Activated T-helper 1 cell treated with anti-CD3 and anti-CD28 coated beads, Interleukin-12 subunit alpha, Interleukin-12 subunit beta, Interleukin-2, Interleukin-4 antibody, amounts not matched to agents 30 ng/mL and 10 ng/mL and 1 ng/mL, durations not matched to agents 14 hours and 24 hours and 36 hours (primary cell): ENCODE measurements at regions of chr4 and their contacts with region 1.

Region 1: GRCh38 chr4:75724066-75724866 is at the start of gene USO1:
- DNase-seq: peak; percentile 100
- H3K4me3 Mint-ChIP-seq: peak within 1 kb of the TSS; percentile 96
- H3K27ac Mint-ChIP-seq: peak within 1 kb of the TSS; percentile 97
- H3K4me1 Mint-ChIP-seq: peaks cover 57% of the 10 kb centered on the region
- H3K27me3 Mint-ChIP-seq: no peaks in the 10 kb centered on the region
- total RNA-seq, gene USO1: 44.5 and 48.6 TPM in 2 replicates

Region 2: GRCh38 chr4:74370912-74371311 is 1353.4 kb before region 1 on chr4:
- intact Hi-C with region 1: no loop called
- DNase-seq: peak; percentile 1
- H3K4me3 Mint-ChIP-seq: no peak overlapping the region
- H3K27ac Mint-ChIP-seq: no peak overlapping the region
- H3K4me1 Mint-ChIP-seq: peaks cover 5% of the 10 kb centered on the region
- H3K27me3 Mint-ChIP-seq: peaks cover 17% of the 10 kb centered on the region

Region 3: GRCh38 chr4:75514131-75514948 is 209.9 kb before region 1 on chr4 and contains the starts of genes RCHY1 and THAP6:
- intact Hi-C with region 1: loop called (anchors 1 kb)
- DNase-seq: peak; percentile 90
- H3K4me3 Mint-ChIP-seq: no peak within 1 kb of the TSS
- H3K27ac Mint-ChIP-seq: peak within 1 kb of the TSS; percentile 100
- H3K4me1 Mint-ChIP-seq: peaks cover 47% of the 10 kb centered on the region
- H3K27me3 Mint-ChIP-seq: no peaks in the 10 kb centered on the region
- total RNA-seq, gene RCHY1: 25.0 and 25.6 TPM in 2 replicates
- total RNA-seq, gene THAP6: 16.3 and 17.3 TPM in 2 replicates

Region 4: DNA sequence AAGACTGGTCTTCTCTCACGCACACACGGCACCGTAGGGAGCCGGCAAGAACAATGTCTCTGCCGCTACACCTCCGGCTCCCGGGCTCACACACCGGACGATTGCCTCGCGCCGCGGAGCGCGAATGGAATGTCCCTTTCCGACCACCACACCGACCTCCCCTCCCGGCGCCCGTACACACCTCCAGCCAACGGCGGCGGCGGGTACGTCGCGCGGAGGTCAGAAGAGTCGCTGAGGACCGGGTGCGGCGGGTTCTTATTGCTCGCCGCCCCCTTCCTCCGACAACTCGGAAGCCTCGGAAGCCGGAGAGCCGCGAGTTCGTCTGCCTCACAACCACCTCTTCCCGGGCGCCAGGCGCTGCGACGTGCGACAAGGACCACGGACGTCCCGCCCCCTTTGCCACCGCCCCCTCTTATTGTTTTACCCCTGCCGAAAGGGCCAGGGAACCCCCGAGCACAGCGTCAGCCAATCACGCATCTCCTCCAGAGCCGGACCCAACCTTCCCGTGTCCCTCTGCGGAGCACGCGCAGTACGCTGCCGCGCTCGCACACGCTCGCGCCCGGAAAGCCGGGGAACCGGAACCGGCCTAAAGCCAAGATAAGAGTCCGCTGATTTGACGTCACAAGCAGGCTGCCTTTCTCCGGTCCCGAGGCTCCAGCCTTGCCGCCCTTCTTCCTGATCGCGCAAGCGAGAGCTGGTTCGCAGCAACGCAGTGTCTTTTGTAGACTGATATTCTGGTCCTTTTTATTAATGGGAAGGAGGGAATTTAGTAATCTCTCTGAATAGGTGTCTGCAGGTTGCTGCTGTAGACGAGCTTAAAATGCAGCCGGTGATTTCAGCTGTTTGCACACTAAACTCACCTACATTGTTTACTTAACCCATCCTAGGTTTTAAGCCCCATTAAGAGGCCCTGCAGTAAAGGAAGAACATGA is 51.0 kb before region 1 on chr4 and contains the start of gene G3BP2:
- intact Hi-C with region 1: loop called (anchors 1 kb)
- DNase-seq: peak; percentile 96
- H3K4me3 Mint-ChIP-seq: peak within 1 kb of the TSS; percentile 96
- H3K27ac Mint-ChIP-seq: peak within 1 kb of the TSS; percentile 98
- H3K4me1 Mint-ChIP-seq: peaks cover 40% of the 10 kb centered on the region
- H3K27me3 Mint-ChIP-seq: no peaks in the 10 kb centered on the region
- total RNA-seq, gene G3BP2: 143 and 144 TPM in 2 replicates

Region 5: DNA sequence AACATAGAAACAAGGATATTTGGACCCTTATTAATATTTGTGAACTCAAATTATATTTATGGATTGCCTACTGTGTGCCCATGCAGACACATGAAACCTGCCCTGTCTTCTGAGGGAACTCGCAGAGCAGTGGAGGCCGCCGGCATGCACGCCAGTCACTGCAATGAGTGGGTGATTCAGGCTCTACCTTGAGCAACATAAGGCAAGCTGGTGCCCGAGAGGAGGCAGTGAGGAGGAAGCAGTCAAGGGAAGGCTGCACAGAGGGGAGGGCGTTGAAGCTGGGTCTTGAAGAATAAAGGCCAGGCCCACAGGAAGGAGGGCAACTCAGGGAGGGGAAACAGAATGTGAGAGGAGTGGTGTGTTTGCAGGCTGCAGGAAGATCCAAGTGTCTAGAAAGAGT is 125.2 kb after region 1 on chr4:
- intact Hi-C with region 1: loop called (anchors 2 kb)
- DNase-seq: no peak
- H3K4me3 Mint-ChIP-seq: no peak overlapping the region
- H3K27ac Mint-ChIP-seq: peak overlapping the region; percentile 19
- H3K4me1 Mint-ChIP-seq: peaks cover 12% of the 10 kb centered on the region
- H3K27me3 Mint-ChIP-seq: no peaks in the 10 kb centered on the region

Region 6: DNA sequence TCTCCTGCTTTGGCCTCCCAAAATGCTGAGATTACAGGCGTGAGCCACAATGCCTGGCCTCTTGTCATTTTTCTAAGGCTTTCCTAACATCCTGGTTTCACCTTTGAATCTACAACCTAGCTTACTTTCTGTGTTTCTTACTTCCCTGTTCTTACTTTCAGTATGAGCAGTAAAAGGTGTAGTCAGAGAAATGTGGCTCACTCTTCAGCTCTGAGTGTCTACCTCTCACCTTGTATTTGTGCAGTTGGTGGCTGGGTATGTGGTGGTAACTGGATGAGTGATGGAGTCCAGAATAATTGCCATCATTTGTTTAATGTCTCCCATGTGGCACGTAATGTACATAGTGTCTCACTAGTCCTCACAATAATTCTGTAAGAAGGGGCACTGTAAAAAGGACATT is 330.8 kb after region 1 on chr4:
- intact Hi-C with region 1: loop called (anchors 5 kb)
- DNase-seq: peak; percentile 9
- H3K4me3 Mint-ChIP-seq: peak overlapping the region; percentile 23
- H3K27ac Mint-ChIP-seq: peak overlapping the region; percentile 52
- H3K4me1 Mint-ChIP-seq: peaks cover 57% of the 10 kb centered on the region
- H3K27me3 Mint-ChIP-seq: no peaks in the 10 kb centered on the region